ENCODE measurements at regions of chr3 and their contacts with region 1.

Region 1: DNA sequence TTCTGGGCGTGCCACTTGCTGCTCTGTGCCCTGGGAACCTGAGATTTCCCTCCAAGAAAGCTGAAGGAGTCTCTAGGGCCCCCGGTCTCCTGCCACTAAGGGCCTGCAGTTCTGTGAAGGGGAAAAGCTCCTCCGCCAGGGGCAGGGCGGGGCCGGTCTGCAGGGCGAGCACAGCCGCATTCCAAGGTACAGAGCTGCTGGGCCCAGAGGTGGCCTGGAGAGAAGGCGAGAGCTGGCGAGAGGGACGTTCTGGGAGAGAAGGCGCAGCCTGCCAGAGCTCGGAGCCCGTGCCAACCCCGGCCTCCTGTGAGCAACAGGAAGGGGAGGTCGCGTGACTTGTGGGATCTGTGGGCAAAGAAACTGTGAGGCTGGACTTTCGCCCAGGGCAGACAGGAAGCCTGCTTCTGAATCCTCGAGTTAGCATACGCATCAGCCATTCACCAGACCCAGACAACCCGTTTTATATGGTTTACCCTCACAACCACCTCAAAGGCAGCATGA is 500.4 kb downstream of the SHQ1 start:
- DNase-seq: peak; percentile 76 to 95
- H3K4me3 ChIP-seq: peak overlapping the region in 1 of 2 donors; percentile 1
- H3K27ac ChIP-seq: peak overlapping the region; percentile 59 to 76
- H3K4me1 ChIP-seq: peaks cover 11 to 17% of the 10 kb centered on the region in 2 donors
- H3K27me3 ChIP-seq: no peaks in the 10 kb centered on the region
- CTCF ChIP-seq: peak in 2 of 3 experiments; percentile 17 to 29

Region 2: DNA sequence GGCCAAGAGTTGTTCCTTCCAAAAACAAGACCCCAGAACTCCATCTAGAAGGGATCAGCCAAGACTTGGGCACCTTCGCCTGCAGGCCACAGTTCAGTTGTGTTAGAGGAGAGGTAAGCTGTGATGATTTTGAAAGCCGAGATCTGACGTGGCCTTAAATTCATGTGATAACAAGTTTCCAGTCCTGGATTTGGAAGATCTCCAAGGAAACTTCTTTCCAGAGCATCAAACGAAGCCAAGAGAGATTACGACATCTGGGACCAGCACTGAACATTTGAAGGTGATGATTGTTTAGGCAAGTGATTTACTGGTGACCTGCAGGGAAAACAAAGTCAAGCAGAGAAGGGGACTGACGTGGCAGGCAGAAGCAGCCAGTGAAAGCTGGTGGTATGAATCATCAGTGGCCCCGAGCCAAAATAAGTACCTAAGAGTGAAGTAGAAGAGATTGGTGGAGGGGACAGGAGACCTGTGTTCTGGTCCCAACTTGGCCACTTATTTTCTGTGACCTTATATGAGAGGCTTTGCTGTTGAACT is 223.9 kb before region 1 on chr3:
- intact Hi-C with region 1: loop called (anchors 5 kb)
- DNase-seq: peak in 1 of 2 donors; percentile 93
- H3K4me3 ChIP-seq: no peak overlapping the region
- H3K27ac ChIP-seq: peak overlapping the region; percentile 41 to 46
- H3K4me1 ChIP-seq: peaks cover 10 to 21% of the 10 kb centered on the region in 2 donors
- H3K27me3 ChIP-seq: no peaks in the 10 kb centered on the region
- CTCF ChIP-seq: no peak

Region 3: DNA sequence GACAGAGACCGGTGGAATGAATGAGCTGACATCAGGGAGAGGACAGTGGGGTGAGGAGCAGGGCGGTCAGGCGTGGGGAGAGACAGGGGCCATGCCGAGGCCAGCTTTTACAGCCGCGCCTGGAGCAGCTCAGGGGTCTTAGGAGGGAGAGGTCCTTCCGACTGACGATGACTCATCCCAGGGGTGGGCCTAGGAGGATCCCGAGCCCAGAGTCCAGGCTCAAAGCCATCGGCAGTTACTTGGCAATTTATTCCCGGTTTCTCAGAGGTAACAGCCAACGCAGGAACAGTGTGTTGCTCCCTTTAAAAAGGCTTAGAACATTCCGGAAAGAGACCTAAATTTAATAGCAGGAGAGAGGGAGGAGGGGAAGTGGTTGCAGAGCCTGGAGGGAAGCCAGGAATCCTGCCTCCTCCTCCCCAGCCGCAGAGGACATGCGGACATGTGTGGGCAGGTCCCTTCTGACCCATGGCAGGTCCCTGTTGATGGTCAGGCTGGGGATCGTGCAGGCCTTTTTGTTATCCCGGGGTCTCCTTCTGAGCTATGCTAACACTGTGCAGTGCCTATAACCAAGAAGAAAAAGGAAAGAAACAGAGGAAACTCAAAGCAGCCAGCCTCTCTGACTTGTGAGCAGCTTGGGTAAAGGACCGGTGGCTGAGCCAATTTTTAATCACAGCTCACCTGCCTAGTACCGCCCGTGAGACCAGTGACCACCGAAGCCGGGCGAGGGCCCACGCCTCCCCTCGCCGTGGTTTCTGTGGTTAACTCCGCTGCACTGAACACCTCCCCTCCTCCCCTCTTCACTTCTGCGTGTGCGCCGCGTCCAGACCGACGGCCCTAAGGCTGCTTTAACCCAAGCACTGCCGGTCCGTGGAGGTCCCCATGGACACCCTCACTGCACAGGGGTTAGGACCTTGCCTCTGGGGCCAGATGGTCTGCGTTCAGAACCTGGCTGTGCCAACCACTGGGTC is 170.5 kb before region 1 on chr3:
- intact Hi-C with region 1: loop called (anchors 5 kb)
- DNase-seq: peak in 1 of 2 donors; percentile 75
- H3K4me3 ChIP-seq: peak overlapping the region; percentile 18 to 51
- H3K27ac ChIP-seq: peak overlapping the region; percentile 25 to 41
- H3K4me1 ChIP-seq: peaks cover 18 to 43% of the 10 kb centered on the region in 2 donors
- H3K27me3 ChIP-seq: no peaks in the 10 kb centered on the region
- CTCF ChIP-seq: no peak

Region 4: GRCh38 chr3:72270072-72270681 is 77.7 kb before region 1 on chr3:
- intact Hi-C with region 1: loop called (anchors 5 kb)
- DNase-seq: peak; percentile 78 to 95
- H3K4me3 ChIP-seq: no peak overlapping the region
- H3K27ac ChIP-seq: peak overlapping the region in 1 of 2 donors; percentile 10
- H3K4me1 ChIP-seq: peaks cover 0 to 24% of the 10 kb centered on the region in 2 donors
- H3K27me3 ChIP-seq: no peaks in the 10 kb centered on the region
- CTCF ChIP-seq: no peak

Region 5: DNA sequence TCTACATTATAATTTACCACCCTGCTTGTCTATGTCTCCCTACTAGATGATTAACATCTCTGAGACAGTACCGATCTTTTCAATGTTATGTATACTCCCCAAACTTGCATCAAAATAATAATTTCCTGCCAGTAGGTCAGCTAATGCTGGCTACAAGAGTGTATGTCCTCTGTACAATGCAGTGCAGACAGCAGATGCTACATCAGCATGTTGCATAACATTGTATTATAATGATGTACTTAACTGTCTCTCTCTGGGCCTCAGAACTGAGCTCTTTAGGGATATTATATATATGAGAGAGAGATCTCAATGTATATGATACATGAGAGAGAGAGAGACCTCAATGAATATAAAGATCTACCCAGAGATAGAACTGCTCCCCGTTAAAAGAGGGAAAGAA is 43.8 kb after region 1 on chr3:
- intact Hi-C with region 1: no loop called
- DNase-seq: no peak
- H3K4me3 ChIP-seq: no peak overlapping the region
- H3K27ac ChIP-seq: no peak overlapping the region
- H3K4me1 ChIP-seq: peaks cover 0 to 4% of the 10 kb centered on the region in 2 donors
- H3K27me3 ChIP-seq: no peaks in the 10 kb centered on the region
- CTCF ChIP-seq: no peak

Region 6: GRCh38 chr3:72482589-72483321 is 134.9 kb after region 1 on chr3:
- intact Hi-C with region 1: loop called (anchors 2 kb)
- DNase-seq: peak; percentile 56 to 93
- H3K4me3 ChIP-seq: peak overlapping the region; percentile 34 to 56
- H3K27ac ChIP-seq: peak overlapping the region; percentile 62 to 83
- H3K4me1 ChIP-seq: peaks cover 5 to 16% of the 10 kb centered on the region in 2 donors
- H3K27me3 ChIP-seq: no peaks in the 10 kb centered on the region
- CTCF ChIP-seq: no peak

Region 7: GRCh38 chr3:72665701-72666443 is 318.0 kb after region 1 on chr3:
- intact Hi-C with region 1: loop called (anchors 5 kb)
- DNase-seq: no peak
- H3K4me3 ChIP-seq: no peak overlapping the region
- H3K27ac ChIP-seq: no peak overlapping the region
- H3K4me1 ChIP-seq: peaks cover 0 to 8% of the 10 kb centered on the region in 2 donors
- H3K27me3 ChIP-seq: no peaks in the 10 kb centered on the region
- CTCF ChIP-seq: peak; percentile 24 to 48 (median 36)